Activated T-helper 1 cell treated with anti-CD3 and anti-CD28 coated beads, Interleukin-12 subunit alpha, Interleukin-12 subunit beta, Interleukin-2, Interleukin-4 antibody, amounts not matched to agents 30 ng/mL and 10 ng/mL and 1 ng/mL, durations not matched to agents 14 hours and 24 hours and 36 hours (primary cell): ENCODE measurements at regions of chr16 and their contacts with region 1.

Region 1: GRCh38 chr16:11224096-11224893 is 31.7 kb downstream of the SOCS1 start:
- DNase-seq: peak; percentile 66
- H3K4me3 Mint-ChIP-seq: peak overlapping the region; percentile 80
- H3K27ac Mint-ChIP-seq: peak overlapping the region; percentile 98
- H3K4me1 Mint-ChIP-seq: peaks cover 58% of the 10 kb centered on the region
- H3K27me3 Mint-ChIP-seq: no peaks in the 10 kb centered on the region

Region 2: GRCh38 chr16:10876799-10877341 is 347.4 kb before region 1 on chr16 and contains the start of gene CIITA:
- intact Hi-C with region 1: loop called (anchors 10 kb)
- DNase-seq: peak; percentile 53
- H3K4me3 Mint-ChIP-seq: peak within 1 kb of the TSS; percentile 86
- H3K27ac Mint-ChIP-seq: peak within 1 kb of the TSS; percentile 59
- H3K4me1 Mint-ChIP-seq: peaks cover 88% of the 10 kb centered on the region
- H3K27me3 Mint-ChIP-seq: peaks cover 14% of the 10 kb centered on the region
- total RNA-seq, gene CIITA: 12.0 and 13.0 TPM in 2 replicates

Region 3: GRCh38 chr16:11051879-11052808 is 172.2 kb before region 1 on chr16:
- intact Hi-C with region 1: loop called (anchors 1 kb)
- DNase-seq: peak; percentile 75
- H3K4me3 Mint-ChIP-seq: peak overlapping the region; percentile 60
- H3K27ac Mint-ChIP-seq: peak overlapping the region; percentile 83
- H3K4me1 Mint-ChIP-seq: peaks cover 68% of the 10 kb centered on the region
- H3K27me3 Mint-ChIP-seq: no peaks in the 10 kb centered on the region

Region 4: DNA sequence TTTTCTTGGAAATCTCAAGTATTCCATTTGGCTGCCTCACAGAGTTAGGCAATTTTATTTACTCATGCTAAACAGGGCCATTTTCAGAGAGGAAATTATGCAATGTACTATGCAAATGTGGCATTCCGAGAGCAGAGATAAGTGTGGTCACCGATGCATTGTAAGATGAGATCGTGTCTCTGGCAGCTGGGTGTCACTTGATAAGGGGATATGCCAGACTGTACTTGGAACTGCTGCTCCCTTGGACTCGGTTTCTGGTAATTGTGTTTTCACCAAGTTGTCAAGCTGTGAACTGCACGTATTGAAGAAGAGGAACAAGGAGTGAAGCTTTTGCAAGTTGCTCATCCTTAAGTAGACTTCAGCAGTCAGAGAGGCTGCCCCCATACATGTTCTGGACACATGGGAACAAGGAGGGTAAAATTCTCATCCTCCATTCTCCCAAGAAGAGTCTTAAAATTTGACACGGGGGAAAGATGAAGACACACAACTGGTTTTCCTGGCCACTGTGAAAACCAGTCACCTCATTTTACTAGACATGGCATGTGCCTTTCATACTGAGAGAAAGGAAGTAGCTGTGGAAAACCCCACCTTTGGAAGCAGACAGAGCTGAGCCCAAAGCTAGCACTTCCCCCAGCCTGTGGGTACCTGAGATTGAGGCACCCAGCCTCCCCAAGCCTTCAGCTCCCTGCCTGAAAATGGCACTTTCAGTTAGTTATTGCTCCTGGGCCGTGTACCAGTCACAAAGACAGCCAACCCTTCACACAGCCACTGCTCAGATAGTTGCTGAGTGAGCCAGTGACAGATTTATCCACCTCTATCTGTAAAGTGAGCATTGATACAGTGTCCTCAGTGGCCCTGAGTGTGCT is 119.0 kb before region 1 on chr16:
- intact Hi-C with region 1: loop called (anchors 1 kb)
- DNase-seq: peak; percentile 44
- H3K4me3 Mint-ChIP-seq: peak overlapping the region; percentile 65
- H3K27ac Mint-ChIP-seq: peak overlapping the region; percentile 88
- H3K4me1 Mint-ChIP-seq: peaks cover 75% of the 10 kb centered on the region
- H3K27me3 Mint-ChIP-seq: no peaks in the 10 kb centered on the region

Region 5: DNA sequence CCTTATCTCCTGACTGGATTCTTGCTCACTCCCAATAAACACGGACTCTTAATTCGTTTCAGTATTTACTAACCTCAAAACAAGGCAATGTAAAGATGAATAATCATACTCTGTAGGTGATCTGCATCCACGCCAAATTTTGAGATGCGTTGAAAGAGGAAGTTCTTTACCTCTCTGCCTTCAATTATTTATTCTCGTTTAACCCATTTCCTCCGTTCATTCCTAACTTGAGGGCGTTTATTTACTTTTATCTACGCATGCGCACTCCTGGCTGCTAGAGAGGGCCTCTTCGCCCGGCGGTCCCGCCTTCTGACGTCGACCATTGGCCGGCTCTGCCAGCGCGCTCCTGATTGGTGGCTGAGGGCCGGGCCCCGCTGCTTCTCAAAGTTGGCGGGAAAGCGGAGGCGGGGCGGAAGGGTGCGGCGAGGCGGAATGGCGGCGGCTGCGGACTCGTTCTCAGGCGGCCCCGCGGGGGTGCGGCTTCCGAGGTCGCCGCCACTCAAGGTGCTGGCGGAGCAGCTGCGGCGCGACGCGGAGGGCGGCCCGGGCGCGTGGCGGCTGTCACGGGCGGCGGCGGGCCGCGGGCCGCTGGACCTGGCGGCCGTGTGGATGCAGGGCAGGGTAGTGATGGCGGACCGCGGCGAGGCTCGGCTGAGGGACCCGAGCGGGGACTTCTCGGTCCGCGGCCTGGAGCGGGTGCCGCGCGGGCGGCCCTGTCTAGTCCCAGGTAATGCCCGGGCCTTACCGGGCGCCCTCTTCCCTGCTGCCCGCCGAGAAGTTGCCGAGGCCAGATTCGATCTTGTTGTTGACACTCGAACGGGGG is 121.0 kb after region 1 on chr16 and contains the start of gene RMI2:
- intact Hi-C with region 1: loop called (anchors 1 kb)
- DNase-seq: peak; percentile 97
- H3K4me3 Mint-ChIP-seq: peak within 1 kb of the TSS; percentile 93
- H3K27ac Mint-ChIP-seq: peak within 1 kb of the TSS; percentile 83
- H3K4me1 Mint-ChIP-seq: peaks cover 58% of the 10 kb centered on the region
- H3K27me3 Mint-ChIP-seq: peaks cover 4% of the 10 kb centered on the region
- total RNA-seq, gene RMI2: 49.8 and 55.7 TPM in 2 replicates

Region 6: DNA sequence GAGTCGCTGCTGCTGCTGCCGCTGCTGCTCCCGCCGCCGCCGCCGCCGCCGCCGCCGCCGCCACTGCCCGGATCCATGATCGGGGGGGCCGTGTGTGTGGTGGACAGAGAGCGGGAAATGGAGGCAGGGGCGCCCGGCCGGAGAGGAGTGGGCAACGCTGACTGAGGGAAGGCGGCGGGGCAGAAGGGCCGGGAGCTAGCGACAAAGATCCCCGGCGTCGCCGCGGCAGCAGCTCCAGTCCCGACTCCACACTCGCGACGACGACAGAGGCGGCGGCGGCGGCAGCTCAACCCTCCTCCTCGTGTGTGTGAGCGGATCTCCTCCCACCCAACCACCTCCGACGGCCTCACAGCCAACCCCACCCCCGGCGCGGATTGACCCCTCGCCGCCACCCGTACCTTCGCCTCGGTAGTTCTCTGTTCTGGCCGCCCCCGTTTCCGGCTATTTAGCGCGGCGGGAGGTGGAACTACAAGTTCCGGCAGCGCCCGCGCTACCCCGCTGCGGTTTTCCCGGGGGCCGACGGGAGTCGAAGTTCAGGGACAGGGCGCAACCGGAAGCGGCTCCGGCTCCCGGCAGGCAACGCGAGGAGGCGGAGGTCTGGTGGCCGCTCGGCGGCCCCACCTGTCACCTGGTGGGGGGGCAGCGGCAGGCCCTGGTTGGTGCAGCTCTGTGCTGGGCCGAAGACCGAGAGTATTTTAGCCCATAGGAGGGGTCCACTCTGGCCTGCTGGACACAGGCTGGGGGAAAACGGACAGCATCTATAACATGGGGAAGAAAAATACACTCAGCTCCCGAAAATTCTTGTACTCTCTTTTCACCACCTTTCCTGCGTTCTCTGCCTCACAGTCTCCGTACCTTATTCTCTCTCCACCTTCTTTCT is 691.6 kb after region 1 on chr16 and contains the start of gene GSPT1:
- intact Hi-C with region 1: loop called (anchors 5 kb)
- DNase-seq: peak; percentile 99
- H3K4me3 Mint-ChIP-seq: peak within 1 kb of the TSS; percentile 91
- H3K27ac Mint-ChIP-seq: peak within 1 kb of the TSS; percentile 94
- H3K4me1 Mint-ChIP-seq: peaks cover 32% of the 10 kb centered on the region
- H3K27me3 Mint-ChIP-seq: peaks cover 8% of the 10 kb centered on the region
- total RNA-seq, gene GSPT1: 207 and 214 TPM in 2 replicates